ENCODE measurements at regions of chr16 and their contacts with region 1.

Region 1: DNA sequence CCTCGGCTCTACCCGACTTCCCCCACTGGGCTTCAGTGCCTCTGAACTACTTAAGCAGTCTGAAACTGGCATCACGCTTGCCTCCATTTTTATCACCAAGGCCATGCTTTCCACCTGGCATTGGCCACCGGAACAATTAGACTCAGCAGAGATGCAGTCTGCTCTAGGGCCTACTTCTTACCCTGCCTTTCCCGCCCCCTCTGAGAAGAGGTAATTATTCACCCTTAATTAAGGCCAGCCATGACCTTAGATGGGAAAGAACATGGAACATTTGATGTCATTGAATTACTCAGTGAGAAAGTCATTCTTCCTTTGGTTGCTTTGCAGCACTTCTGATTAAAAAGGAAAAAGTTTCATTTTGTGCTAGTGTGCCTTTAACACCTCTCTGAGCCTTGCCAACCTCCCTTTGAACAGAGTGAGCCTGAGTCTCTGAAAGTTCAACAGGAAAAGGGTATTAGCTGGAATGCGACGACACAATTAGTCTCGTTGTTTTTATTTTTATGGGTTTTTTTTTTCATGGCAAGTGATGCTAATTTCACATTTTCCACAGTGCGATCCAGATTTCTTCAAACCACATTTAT is 60.9 kb upstream of the TNRC6A start:
- DNase-seq: peak; percentile 74 to 82
- ATAC-seq: peak; percentile 80
- H3K4me3 ChIP-seq: no peak overlapping the region
- H3K27ac ChIP-seq: peak overlapping the region; percentile 85 to 93
- H3K4me1 ChIP-seq: peaks cover 0 to 2% of the 10 kb centered on the region in 2 donors
- H3K27me3 ChIP-seq: no peaks in the 10 kb centered on the region

Region 2: DNA sequence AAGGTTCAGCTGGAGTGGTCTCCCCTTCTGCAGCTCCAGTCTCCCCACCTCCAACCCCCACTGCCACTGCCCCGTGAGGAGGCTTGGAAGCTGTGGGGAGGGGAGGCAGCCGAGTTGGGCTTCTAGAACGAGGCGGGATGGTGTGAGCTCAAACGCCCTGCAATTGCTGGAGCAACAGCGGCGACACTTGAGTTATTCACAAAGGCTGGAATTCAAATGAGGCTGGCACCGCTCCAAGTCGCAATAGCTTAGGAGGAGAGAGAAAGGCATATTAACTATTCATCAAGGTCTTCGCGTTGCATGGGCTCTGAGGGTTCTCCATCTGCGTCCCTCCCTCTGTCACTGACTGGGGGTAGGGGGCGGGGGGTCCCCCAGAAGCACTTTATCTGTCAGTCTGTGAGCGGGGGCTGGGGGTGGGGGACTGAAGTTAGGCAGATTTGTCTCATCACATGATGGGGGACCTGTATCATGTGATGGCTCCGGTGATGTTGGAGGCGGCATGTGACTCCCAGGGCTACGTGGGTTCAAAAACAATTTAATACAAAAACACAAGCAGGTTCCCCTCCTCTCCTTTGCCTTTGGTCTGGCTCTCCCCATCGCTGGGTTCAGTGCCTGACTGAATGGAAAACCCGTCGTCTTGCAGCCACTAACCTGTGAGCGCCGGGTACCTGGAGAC is 58.7 kb before region 1 on chr16:
- intact Hi-C with region 1: no loop called
- DNase-seq: peak; percentile 65 to 87
- ATAC-seq: peak; percentile 52
- H3K4me3 ChIP-seq: no peak overlapping the region
- H3K27ac ChIP-seq: no peak overlapping the region
- H3K4me1 ChIP-seq: no peaks in the 10 kb centered on the region
- H3K27me3 ChIP-seq: no peaks in the 10 kb centered on the region

Region 3: DNA sequence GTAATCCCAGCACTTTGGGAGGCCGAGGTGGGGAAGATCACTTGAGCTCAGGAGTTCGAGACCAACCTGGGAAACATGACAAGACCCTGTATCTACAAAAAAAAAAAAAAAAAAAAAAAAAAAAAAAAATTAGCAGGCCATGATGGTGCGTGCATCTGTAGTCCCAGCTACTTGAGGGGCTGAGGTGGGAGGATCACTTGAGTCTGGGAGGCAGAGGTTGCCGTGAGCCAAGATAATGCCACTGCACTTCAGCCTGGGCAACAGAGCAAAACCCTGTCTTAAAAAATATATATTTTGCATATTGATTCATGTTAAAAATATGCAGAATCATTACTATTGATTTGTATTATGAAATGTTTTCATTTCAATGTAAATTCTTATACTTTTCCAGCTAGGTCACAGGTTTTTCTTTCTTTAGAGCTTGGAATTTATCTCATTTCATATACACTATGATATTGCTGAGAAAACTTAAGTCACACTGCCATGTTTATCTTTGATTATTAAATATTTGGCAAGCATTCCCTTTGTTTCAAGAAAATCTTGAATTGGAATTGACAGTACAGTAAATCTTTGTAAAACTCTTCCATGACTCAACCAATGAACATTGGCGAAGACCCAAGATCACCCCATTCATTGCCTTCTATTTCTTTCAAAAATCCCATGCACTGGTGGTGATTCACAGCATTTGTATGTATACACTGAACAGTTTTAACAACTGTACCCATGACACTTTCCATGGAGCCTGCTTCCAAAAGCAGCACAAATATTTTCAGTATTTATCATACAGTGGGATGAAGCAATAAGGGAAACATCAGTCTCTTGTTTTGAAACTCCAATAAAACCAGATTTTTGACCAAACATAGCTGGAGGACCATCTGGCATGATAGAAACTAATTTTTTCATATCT is 22.6 kb before region 1 on chr16:
- intact Hi-C with region 1: loop called in 1 of 2 experiments (anchors 2 kb)
- DNase-seq: no peak
- ATAC-seq: peak; percentile 82
- H3K4me3 ChIP-seq: no peak overlapping the region
- H3K27ac ChIP-seq: no peak overlapping the region
- H3K4me1 ChIP-seq: no peaks in the 10 kb centered on the region
- H3K27me3 ChIP-seq: no peaks in the 10 kb centered on the region

Region 4: DNA sequence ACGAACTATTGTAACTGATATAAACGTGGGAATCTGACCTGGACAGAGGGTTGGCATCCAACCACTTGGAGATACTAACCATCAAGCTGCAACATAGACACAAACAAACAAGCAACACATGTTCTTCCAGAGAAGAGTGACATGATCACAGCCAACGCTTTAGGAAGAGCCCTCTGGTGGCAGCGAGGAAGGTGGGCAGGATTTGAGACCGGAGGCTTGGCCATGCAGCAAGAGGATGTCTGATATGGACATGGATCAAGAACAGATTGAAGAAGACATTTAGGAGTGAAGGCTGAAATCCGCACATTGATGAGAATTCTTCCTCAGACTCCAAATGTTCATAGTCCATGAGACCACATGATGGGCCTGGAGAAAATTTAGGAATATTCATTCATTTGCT is 20.6 kb after region 1 on chr16:
- intact Hi-C with region 1: no loop called
- DNase-seq: no peak
- ATAC-seq: no peak
- H3K4me3 ChIP-seq: no peak overlapping the region
- H3K27ac ChIP-seq: no peak overlapping the region
- H3K4me1 ChIP-seq: peaks cover 0 to 2% of the 10 kb centered on the region in 2 donors
- H3K27me3 ChIP-seq: no peaks in the 10 kb centered on the region

Region 5: DNA sequence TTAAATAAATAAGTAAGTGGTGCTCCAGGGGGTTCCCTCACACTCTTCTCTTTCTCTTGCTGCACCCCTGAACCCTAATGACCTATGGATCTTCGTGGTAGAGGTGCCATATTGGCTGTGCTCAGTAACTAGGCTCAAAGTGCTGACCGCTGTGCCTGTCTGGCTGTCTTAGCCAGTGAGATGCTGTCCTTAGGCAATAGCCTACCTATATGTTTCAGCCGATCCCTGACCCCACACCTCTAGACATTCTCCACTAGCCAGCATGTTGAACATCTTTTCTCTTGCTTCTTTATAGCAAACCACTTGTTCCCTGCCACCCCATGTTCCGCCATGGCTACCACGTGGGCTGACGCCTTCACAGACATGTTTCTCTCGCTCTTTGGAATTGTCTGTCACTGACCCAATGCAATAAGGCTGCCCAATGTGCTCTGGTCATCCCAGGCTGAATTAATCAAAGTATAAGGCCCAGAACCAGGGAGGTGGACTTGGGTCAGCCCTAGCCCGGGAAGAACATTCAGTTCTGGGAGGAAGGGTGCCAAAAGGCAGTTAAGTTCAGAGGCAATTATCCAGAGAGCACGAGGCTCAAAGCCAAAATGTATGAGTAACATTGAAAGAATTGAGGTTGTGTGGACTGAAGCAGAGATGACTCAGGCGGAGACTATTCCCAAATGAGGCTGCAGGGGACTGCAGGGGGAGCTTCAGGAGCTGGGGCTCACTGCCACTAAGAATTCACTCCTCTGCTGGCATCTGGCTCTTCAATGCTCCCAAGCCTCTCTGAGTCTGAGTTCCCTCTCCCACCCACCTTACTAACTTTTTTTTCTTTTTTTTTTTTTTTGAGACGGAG is 32.2 kb after region 1 on chr16:
- intact Hi-C with region 1: loop called (anchors 1 to 5 kb)
- DNase-seq: peak; percentile 83 to 85
- ATAC-seq: peak; percentile 95
- H3K4me3 ChIP-seq: no peak overlapping the region
- H3K27ac ChIP-seq: peak overlapping the region; percentile 96
- H3K4me1 ChIP-seq: peaks cover 0 to 4% of the 10 kb centered on the region in 2 donors
- H3K27me3 ChIP-seq: no peaks in the 10 kb centered on the region

Region 6: GRCh38 chr16:24717411-24717810 is 48.8 kb after region 1 on chr16:
- intact Hi-C with region 1: no loop called
- DNase-seq: no peak
- ATAC-seq: no peak
- H3K4me3 ChIP-seq: no peak overlapping the region
- H3K27ac ChIP-seq: no peak overlapping the region
- H3K4me1 ChIP-seq: peaks cover 0 to 7% of the 10 kb centered on the region in 2 donors
- H3K27me3 ChIP-seq: no peaks in the 10 kb centered on the region

Region 7: DNA sequence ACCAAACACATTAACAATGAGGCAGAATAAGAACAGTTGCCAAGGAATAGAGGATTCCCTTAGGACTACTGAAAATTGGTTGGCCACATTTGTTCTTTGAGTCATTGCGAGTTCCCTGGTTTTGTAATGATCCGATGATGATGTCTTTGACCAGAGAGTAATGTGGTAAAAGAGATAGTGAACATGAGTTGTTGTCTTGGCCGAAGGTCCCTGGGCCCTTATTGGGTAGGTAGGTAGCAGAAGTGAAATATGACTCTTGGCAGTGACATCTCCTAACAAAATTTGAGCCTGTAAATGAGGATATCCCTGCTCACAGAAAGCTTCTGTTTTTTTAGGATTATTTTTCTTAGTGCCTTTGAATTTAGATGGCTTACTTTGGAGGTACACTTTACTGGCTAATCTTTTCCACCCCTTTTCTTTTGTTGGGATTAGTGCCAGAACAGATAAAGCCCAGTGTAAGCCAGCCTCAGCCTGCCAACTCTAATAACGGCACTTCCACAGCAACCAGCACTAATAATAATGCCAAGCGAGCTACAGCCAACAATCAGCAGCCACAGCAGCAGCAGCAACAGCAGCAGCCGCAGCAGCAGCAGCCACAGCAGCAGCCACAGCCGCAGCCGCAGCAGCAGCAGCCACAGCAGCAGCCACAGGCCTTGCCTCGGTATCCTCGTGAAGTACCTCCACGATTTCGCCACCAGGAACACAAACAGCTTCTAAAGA is 108.1 kb after region 1 on chr16:
- intact Hi-C with region 1: loop called in 1 of 2 experiments (anchors 10 kb)
- DNase-seq: peak in 1 of 2 donors; percentile 55
- ATAC-seq: peak; percentile 78
- H3K4me3 ChIP-seq: no peak overlapping the region
- H3K27ac ChIP-seq: peak overlapping the region; percentile 39 to 77
- H3K4me1 ChIP-seq: peaks cover 2 to 26% of the 10 kb centered on the region in 2 donors
- H3K27me3 ChIP-seq: no peaks in the 10 kb centered on the region

Region 8: DNA sequence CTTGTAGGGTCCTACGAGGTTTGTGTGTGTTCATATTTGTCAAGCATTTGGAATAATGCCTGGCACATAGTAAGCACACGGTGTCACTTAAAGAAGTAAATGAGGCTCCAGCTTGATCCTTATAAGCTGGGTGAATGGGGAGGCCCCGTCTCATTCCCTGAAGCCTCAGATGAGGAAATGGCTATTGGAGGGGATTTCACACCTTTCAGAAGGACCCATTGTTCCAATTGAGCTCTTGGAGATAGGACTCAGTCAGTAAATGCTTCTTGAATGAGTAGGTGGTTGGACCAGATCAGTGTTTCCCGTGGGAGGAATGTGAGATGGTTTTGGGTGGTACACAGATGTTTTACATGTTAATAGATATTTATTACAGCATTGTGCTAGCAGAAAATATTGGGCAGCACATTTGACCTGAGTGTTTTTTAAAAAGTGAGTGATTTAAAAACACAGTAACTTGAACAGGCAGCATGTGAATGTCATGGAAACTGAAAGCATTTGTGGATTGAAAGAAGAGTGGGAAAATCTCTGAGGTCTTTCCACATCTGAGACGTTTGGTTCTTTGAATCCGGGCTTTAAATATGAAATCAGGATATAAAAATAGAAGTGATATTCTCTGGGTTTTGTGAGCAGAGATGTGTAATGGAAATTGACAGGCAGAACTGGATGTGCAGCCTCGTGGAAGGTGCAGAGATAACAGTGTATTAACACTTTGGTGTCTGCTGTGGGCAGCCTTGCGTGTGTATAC is 383.0 kb after region 1 on chr16:
- intact Hi-C with region 1: no loop called
- DNase-seq: no peak
- ATAC-seq: no peak
- H3K4me3 ChIP-seq: no peak overlapping the region
- H3K27ac ChIP-seq: peak overlapping the region; percentile 28 to 47
- H3K4me1 ChIP-seq: peaks cover 0 to 3% of the 10 kb centered on the region in 2 donors
- H3K27me3 ChIP-seq: no peaks in the 10 kb centered on the region